ENCODE measurements at regions of chr16 and their contacts with region 1.

Region 1: GRCh38 chr16:69310653-69311532 is at the start of gene VPS4A:
- DNase-seq: peak; percentile 97
- ATAC-seq: peak; percentile 95
- H3K4me3 Mint-ChIP-seq: peak within 1 kb of the TSS; percentile 95
- H3K27ac Mint-ChIP-seq: peak within 1 kb of the TSS; percentile 92
- H3K4me1 Mint-ChIP-seq: peaks cover 22% of the 10 kb centered on the region
- H3K27me3 Mint-ChIP-seq: no peaks in the 10 kb centered on the region
- total RNA-seq, gene VPS4A: 31.5 to 38.9 TPM

Region 2: GRCh38 chr16:68951991-68952877 is 358.7 kb before region 1 on chr16:
- CTCF ChIA-PET with region 1: no interaction called
- DNase-seq: no peak
- ATAC-seq: no peak
- H3K4me3 Mint-ChIP-seq: no peak overlapping the region
- H3K27ac Mint-ChIP-seq: no peak overlapping the region
- H3K4me1 Mint-ChIP-seq: no peaks in the 10 kb centered on the region
- H3K27me3 Mint-ChIP-seq: no peaks in the 10 kb centered on the region

Region 3: DNA sequence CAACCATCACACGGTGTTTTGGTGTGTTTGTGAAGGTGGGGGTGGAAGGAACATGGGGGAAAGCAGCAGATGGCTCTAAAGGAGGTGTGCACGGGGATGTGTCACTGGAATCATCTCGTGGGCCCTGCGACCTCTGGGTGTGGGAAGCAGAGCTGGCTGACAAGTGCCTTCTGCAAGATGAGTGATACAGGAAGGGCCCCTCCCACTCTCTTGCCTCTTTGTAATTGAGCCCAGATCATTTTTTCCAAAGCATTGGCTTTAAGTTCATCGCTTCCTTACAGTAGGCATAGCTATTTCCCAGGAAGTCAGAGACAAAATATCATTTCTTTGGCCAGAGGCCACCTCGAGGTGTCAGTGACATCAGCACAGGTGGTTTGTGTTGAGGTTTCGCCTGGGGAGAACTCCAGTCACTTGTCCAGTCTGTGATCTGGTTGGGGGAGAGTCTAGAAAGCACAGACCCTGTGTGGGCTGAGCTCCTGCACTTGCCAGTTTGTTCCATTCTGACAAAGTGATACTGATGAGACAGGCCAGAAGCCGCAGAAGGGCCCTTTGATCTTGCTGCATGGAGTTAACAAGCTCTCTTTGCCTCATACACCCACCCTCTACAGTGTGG is 144.6 kb before region 1 on chr16:
- CTCF ChIA-PET with region 1: no interaction called
- DNase-seq: peak; percentile 72
- ATAC-seq: peak; percentile 86
- H3K4me3 Mint-ChIP-seq: no peak overlapping the region
- H3K27ac Mint-ChIP-seq: peak overlapping the region; percentile 77
- H3K4me1 Mint-ChIP-seq: peaks cover 31% of the 10 kb centered on the region
- H3K27me3 Mint-ChIP-seq: no peaks in the 10 kb centered on the region

Region 4: DNA sequence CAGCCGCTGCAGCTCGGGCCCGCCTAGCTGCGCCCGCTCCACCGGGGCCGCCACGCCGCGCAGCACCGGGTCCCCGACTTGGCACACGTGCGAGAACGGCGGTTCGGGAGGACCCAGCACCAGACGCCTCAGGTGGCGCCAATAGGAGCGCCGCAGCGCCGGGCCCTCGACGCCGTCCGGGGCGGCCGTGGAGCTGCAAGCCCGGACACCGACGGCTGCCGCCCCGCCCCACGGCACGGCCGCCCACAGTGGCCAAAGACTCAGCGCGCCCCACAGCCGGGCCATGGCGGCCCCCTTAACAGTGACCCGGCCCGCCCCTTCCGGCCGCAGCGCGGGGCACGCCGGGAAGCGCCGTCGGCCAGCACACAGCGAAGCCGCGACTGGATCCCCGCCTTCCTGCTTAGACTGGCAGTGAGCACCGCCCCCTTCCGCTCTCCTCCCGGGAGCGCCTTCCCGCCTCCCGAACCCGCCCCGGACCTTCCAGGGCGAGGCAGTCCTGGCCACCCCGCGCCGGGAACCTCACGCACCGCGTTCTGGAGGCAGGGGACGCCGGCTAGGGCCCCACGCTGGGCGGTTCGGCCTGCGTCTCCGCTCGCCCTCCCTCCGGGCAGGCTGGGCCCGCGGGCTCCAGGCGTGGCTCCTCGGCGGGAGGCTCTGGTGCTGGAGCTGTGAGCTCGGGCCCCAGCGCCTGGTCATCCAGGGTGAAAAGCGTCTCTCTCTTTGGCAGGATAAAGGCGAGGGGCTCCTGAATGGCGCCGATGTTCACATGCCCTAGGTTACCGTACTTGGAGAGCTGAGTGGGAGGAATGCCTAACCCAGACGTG is 19.6 kb after region 1 on chr16 and contains the start of gene PDF:
- CTCF ChIA-PET with region 1: interaction called, 17 read pairs
- DNase-seq: peak; percentile 90
- ATAC-seq: peak; percentile 95
- H3K4me3 Mint-ChIP-seq: peak within 1 kb of the TSS; percentile 82
- H3K27ac Mint-ChIP-seq: peak within 1 kb of the TSS; percentile 85
- H3K4me1 Mint-ChIP-seq: peaks cover 52% of the 10 kb centered on the region
- H3K27me3 Mint-ChIP-seq: no peaks in the 10 kb centered on the region
- total RNA-seq, gene PDF: 18.3 to 21.3 TPM

Region 5: GRCh38 chr16:69346683-69347082 is 35.8 kb after region 1 on chr16:
- CTCF ChIA-PET with region 1: no interaction called
- DNase-seq: no peak
- ATAC-seq: no peak
- H3K4me3 Mint-ChIP-seq: no peak overlapping the region
- H3K27ac Mint-ChIP-seq: no peak overlapping the region
- H3K4me1 Mint-ChIP-seq: peaks cover 26% of the 10 kb centered on the region
- H3K27me3 Mint-ChIP-seq: no peaks in the 10 kb centered on the region

Measured in activated CD8-positive, alpha-beta memory T cell treated with anti-CD3 and anti-CD28 coated beads, Interleukin-2, amount 10 ng/mL, durations not matched to agents 7 days and 5 days (primary cell).